K562 (cell line): ENCODE measurements at regions of chr1 and their contacts with region 1.

Region 1: GRCh38 chr1:155193275-155193990 is 14.3 kb downstream of the THBS3 start:
- DNase-seq: peak; percentile 86 to 94 (median 89)
- ATAC-seq: peak; percentile 93
- H3K4me3 ChIP-seq: peak overlapping the region; percentile 69
- H3K27ac ChIP-seq: peak overlapping the region; percentile 100
- H3K4me1 ChIP-seq: peaks cover 19 to 48% of the 10 kb centered on the region in 2 experiments
- H3K27me3 ChIP-seq: no peaks in the 10 kb centered on the region
- CTCF ChIP-seq: peak; percentile 95 to 99 (median 95)
- EP300 ChIP-seq: no peak; the same call in 1 of the 2 replicates
- POLR2A ChIP-seq: peak; percentile 90
- RAD21 ChIP-seq: peak; percentile 56 to 72; a peak in 3 of 4 replicates

Region 2: DNA sequence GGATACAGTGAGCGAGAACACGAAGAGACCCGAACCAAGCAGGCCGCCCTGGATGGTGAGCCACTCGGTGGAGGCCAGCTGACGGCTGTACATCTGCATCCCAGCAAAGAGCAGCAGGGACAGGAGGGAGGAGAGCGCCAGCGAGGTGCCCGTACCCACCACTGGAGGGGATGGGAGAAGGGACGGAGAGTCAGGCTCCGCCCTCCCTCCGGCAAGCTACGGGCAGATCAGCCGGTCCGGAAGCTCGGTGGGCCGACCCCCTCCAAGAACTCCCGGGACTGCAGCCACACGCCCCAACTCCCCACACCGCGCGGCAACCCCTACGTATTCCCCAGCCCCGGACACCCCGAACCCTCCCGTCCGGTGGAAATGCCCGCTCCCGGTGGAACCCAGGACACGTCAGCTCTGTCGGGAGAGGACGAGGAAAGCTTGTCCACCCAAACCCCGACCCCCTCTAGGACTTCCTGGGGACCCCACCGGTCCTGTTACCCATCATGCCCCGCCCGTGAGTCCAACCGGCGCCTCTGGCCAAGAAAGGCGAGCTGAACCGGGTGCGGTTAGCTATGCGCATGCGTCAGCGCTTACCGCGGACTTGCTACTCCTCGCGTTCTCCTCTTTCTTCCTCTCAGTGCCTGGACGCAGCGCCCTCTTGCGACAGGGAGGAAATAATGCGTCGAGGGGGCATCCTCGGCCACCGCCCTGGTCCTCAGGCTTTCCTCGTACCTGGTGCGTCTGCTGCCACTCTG is 20.5 kb before region 1 on chr1 and contains the start of gene KRTCAP2:
- CTCF ChIA-PET with region 1: interaction called, 3 read pairs
- POLR2A ChIA-PET with region 1: interaction called, 12 read pairs
- in situ Hi-C with region 1: no loop called
- intact Hi-C with region 1: loop called (anchors 1 kb)
- DNase-seq: peak; percentile 96 to 98 (median 98)
- ATAC-seq: peak; percentile 90
- H3K4me3 ChIP-seq: peak within 1 kb of the TSS; percentile 83
- H3K27ac ChIP-seq: peak within 1 kb of the TSS; percentile 89
- H3K4me1 ChIP-seq: peaks cover 14 to 44% of the 10 kb centered on the region in 2 experiments; a peak in 4 of 5 replicates
- H3K27me3 ChIP-seq: no peaks in the 10 kb centered on the region
- CTCF ChIP-seq: peak; percentile 93 to 98 (median 97)
- EP300 ChIP-seq: peak; percentile 42; the same call in 1 of the 2 replicates
- POLR2A ChIP-seq: peak; percentile 93
- RAD21 ChIP-seq: peak in 1 of 2 experiments; percentile 47; a peak in 3 of 4 replicates
- polyA plus RNA-seq, gene KRTCAP2: 429 to 436 TPM

Region 3: DNA sequence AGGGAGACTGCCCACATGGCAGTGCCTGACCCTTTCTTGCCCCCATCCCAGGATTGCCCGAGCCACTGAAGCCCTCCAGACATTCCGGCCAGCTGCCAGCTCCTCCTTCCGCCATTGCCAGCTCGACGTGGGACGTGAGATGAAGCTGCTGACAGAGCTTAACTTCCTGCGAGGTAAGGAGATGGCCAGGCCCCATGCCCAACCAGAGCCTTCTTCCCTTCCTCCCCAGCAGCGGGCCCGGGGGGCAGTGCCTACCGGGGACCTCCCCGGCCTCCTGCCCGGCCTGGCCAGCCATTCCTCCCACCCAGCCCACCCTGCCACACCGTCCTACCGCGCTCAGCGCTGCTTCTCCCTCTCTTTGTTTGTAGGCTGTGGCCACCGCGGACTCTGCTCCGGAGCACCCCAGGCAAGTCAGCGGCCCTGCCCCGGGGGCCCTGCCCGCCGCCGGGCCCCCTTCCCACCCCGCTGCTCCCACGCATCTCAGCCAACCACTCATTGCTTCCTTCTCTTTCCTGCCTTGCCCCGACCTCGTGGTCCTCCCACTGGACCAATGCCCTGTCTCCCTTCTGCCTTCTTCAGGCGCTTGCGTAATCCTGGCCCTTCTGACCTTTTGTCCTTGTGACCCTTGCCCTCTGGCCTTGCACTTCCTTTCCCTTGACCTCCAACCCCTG is 14.9 kb before region 1 on chr1:
- CTCF ChIA-PET with region 1: interaction called, 3 read pairs
- POLR2A ChIA-PET with region 1: interaction called, 4 read pairs
- in situ Hi-C with region 1: no loop called
- intact Hi-C with region 1: loop called (anchors 1 kb)
- DNase-seq: peak in 3 of 4 experiments; percentile 41 to 50 (median 48)
- ATAC-seq: no peak
- H3K4me3 ChIP-seq: no peak overlapping the region
- H3K27ac ChIP-seq: no peak overlapping the region
- H3K4me1 ChIP-seq: peaks cover 12 to 61% of the 10 kb centered on the region in 2 experiments; a peak in 4 of 5 replicates
- H3K27me3 ChIP-seq: no peaks in the 10 kb centered on the region
- CTCF ChIP-seq: no peak
- EP300 ChIP-seq: no peak
- POLR2A ChIP-seq: no peak
- RAD21 ChIP-seq: no peak

Region 4: GRCh38 chr1:155227261-155228095 is 34.0 kb after region 1 on chr1:
- CTCF ChIA-PET with region 1: no interaction called
- POLR2A ChIA-PET with region 1: interaction called, 7 read pairs
- in situ Hi-C with region 1: no loop called
- intact Hi-C with region 1: loop called (anchors 1 kb)
- DNase-seq: peak; percentile 100
- ATAC-seq: peak; percentile 96
- H3K4me3 ChIP-seq: peak overlapping the region; percentile 51
- H3K27ac ChIP-seq: peak overlapping the region; percentile 86
- H3K4me1 ChIP-seq: peaks cover 30 to 50% of the 10 kb centered on the region in 2 experiments
- H3K27me3 ChIP-seq: no peaks in the 10 kb centered on the region
- CTCF ChIP-seq: peak in 2 of 3 experiments; percentile 2 to 15; a peak in 1 of 6 replicates
- EP300 ChIP-seq: no peak
- POLR2A ChIP-seq: peak; percentile 91
- RAD21 ChIP-seq: no peak